ENCODE measurements at regions of chr2 and their contacts with region 1.

Region 1: DNA sequence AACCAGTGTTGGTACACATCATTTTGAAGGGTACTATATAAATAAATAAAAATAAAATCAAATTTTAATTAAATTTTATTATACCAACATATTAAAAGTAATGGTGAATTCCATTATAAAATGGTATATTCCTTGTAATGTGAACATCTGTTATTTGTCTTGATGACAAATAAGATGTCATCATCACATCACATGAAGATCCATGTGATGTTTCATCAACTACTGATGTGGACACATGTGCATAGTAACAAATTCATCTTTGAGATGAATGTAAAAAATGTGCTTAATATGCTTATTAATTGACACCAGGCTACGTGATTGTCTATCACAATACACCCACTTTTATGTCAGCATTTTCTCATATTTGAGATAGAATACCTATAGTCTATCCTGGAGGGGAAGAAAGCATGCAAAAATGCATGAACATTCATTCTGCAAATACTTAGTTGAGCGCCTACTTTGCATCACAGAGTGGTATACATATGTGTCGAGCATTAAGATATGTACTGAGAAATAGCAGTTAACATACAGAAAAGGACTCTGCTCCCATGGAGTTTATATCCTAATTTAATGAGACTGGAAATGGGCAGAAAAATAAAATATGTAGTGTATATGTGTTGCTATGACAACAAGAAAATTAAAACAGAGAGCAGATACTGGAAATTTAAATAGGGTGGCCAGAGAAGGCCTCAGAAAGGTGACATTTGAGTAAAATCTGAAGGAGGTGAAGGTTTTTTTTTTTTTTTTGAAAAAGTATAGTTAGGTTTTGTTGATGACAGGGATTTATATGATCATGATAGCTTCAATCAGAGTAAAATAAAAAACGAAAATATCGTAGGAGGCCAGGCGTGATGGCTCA is 281.1 kb downstream of the ARHGAP15 start:
- DNase-seq: no peak
- H3K4me3 ChIP-seq: no peak overlapping the region
- H3K4me3 Mint-ChIP-seq: peak overlapping the region in 1 of 8 donors; percentile 13
- H3K27ac ChIP-seq: no peak overlapping the region
- H3K27ac Mint-ChIP-seq: peak overlapping the region in 4 of 7 donors; percentile 19 to 53 (median 40)
- H3K4me1 ChIP-seq: peaks cover 11% of the 10 kb centered on the region
- H3K4me1 Mint-ChIP-seq: peaks cover 27 to 62% (median 50%) of the 10 kb centered on the region in 4 donors
- H3K27me3 ChIP-seq: no peaks in the 10 kb centered on the region
- H3K27me3 Mint-ChIP-seq: no peaks in the 10 kb centered on the region

Region 2: GRCh38 chr2:143375384-143375880 is 34.9 kb before region 1 on chr2:
- CTCF ChIA-PET with region 1: no interaction called
- POLR2A ChIA-PET with region 1: no interaction called
- intact Hi-C with region 1: no loop called
- DNase-seq: no peak
- H3K4me3 ChIP-seq: no peak overlapping the region
- H3K4me3 Mint-ChIP-seq: peak overlapping the region in 3 of 8 donors; percentile 3 to 28 (median 9)
- H3K27ac ChIP-seq: no peak overlapping the region
- H3K27ac Mint-ChIP-seq: peak overlapping the region in 4 of 7 donors; percentile 15 to 66 (median 42)
- H3K4me1 ChIP-seq: peaks cover 11% of the 10 kb centered on the region
- H3K4me1 Mint-ChIP-seq: peaks cover 28 to 62% (median 44%) of the 10 kb centered on the region in 4 donors
- H3K27me3 ChIP-seq: no peaks in the 10 kb centered on the region
- H3K27me3 Mint-ChIP-seq: no peaks in the 10 kb centered on the region

Region 3: DNA sequence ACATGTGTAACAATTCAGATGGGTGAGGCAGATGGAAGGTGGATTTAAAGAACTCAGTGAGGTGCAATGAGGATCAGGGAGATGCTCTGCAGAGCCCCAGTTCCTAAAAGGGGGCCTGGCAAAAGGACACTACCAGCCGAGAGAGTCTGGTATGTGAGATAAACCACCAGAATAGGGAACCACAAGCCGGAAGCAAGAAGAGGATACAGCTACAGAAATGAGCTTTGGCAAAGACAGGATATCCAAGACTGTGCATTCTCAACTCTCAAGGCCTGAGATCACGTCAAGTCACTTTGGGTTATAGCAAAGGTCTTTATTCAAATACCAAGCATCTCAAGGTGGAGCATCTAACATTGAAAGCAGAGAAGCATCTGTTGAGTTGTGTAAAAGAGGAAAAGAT is 12.4 kb after region 1 on chr2:
- CTCF ChIA-PET with region 1: no interaction called
- POLR2A ChIA-PET with region 1: no interaction called
- intact Hi-C with region 1: loop called (anchors 2 kb)
- DNase-seq: peak in 2 of 5 donors; percentile 13 to 19
- H3K4me3 ChIP-seq: no peak overlapping the region
- H3K4me3 Mint-ChIP-seq: peak overlapping the region in 5 of 8 donors; percentile 0 to 42 (median 7)
- H3K27ac ChIP-seq: no peak overlapping the region
- H3K27ac Mint-ChIP-seq: peak overlapping the region in 4 of 7 donors; percentile 1 to 67 (median 23)
- H3K4me1 ChIP-seq: peaks cover 51% of the 10 kb centered on the region
- H3K4me1 Mint-ChIP-seq: peaks cover 61 to 83% (median 73%) of the 10 kb centered on the region in 4 donors
- H3K27me3 ChIP-seq: no peaks in the 10 kb centered on the region
- H3K27me3 Mint-ChIP-seq: no peaks in the 10 kb centered on the region